ENCODE measurements at regions of chr12 and their contacts with region 1.

Region 1: DNA sequence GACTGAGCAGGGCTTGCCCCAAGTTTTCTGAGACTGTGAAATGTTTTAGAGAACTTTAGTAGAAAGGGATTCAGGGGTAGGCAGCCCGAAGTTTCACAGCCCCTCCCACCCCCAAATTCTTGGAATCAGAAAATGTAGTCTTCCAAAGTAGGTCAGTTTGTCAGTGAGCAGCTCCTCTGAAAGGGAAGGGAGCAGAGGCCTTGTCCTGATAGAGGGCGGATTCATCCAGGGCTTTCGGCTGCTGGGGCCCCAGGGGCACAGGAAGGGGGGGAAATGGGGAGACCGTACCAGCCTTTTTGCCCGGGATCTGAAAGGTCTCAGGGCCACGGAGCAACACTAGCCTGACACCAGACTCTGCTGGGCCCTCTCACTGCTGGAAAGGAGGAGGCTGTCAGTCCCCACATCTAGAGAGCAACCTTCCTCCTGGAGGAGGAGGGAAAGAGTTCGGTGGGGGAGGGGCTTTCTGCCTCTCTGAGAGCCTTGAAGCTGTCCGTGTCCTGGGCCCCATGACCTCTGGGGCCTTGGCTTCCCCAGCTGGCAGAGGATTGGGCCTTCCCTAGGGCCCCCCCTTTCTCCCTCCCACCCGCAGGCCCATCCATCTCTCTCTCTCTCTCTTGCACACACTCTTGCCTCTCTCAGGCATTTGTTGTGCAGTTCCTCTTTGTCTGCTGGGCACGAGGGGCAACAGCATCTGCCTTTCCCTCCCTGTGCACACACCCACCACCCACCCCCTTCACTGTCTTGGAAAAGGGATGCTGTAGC is at the start of gene IKZF4:
- DNase-seq: peak; percentile 42
- ATAC-seq: peak; percentile 17
- H3K4me3 Mint-ChIP-seq: peak within 1 kb of the TSS; percentile 93
- H3K27ac Mint-ChIP-seq: peak within 1 kb of the TSS; percentile 96
- H3K4me1 Mint-ChIP-seq: peaks cover 42% of the 10 kb centered on the region
- H3K27me3 Mint-ChIP-seq: no peaks in the 10 kb centered on the region
- total RNA-seq, gene IKZF4: 14.9 to 18.2 TPM

Region 2: DNA sequence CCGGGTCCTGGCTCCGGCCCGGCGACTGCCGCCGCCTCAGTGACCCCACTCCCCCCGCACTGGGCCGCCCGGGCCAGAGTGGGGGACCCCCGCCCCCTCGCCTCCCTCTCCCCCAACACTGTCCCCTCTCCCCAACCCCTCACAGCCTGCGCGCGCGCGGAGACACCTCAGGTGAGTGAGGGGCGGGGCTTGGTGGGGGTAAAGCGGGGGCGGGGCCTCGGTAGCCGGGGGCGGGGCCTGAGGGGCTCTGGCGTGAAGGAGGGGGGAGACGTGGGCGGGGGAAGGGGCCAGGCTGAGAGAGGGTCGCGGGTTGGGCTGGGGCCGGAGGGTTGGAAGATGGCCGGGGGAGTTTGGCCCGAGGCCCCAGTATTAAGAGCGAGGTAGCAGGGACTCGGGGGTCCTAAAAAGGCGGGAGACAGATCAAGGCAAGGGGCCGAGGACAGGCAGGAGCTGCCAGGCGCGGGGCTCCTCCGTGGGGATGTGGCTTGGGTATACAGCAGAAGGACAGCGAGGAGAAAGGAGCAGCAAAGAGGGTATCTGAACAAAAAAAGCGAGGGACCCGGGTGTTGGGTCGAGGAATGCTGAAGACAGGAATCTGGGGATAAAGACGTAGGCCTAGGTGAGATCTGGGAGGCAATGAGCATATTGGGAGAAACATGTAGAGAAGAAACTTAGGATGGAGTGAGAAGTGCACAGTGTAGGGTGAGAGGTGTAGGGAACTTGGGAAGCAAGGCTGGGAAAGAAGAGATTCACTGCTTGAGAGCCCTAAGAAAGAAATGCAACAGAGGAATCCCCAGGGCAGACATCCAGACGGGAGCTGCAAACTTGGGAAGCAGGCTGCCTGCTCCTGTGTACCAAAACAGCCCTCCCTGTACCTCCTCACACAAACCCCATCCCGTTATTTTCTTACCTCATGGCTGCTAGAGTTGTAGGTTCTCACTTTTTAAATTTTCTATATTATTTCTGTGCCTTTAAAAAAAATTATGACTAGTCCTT is 12.7 kb before region 1 on chr12:
- POLR2A ChIA-PET with region 1: interaction called, 24 read pairs
- DNase-seq: peak; percentile 79
- ATAC-seq: peak; percentile 79
- H3K4me3 Mint-ChIP-seq: peak overlapping the region; percentile 86
- H3K27ac Mint-ChIP-seq: peak overlapping the region; percentile 85
- H3K4me1 Mint-ChIP-seq: peaks cover 22% of the 10 kb centered on the region
- H3K27me3 Mint-ChIP-seq: no peaks in the 10 kb centered on the region

Region 3: DNA sequence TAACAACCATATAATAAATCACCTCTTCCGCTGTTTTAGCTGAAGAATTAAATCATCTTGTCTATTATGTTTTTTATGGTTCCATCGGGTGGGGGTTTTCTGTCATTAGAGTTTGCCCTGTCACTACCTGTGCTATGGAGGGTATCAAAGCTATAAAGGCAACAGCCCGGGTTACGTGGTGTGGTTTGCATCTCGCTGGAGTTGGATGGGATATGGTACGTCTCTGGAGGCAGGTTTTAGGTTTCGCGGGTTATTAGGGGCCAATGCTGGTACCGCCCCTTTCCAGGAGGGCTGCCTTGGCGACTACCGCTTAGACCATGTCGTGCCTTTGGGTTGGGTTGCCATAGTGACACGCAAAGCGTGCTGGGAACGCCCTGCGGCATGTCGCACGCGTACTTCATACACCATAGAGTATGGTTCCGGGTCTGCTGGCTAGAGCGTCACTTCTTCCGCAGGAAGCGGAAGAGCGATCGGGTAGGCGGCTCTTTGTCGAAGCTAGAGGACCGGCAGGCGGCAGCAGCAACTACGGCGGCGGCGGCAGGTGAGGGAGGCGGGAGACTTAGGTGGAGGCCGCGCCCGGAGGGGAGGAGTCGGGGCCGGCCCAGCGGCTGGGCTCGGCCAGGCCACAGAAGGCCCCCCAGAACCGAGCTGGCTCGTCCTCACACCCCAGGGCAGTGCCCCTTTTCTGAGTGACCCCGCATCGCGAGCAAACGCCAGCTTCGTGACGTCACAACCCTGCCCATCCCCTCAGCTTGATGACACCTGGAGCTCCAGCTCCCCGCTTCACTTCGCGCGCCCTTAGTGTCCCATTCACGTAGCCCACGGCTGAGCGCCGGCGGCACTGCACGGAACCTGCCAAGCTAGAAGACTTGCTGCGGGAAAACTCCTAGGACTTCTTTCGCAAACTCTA is 97.4 kb after region 1 on chr12 and contains the start of gene ZC3H10:
- POLR2A ChIA-PET with region 1: no interaction called
- DNase-seq: peak; percentile 94
- ATAC-seq: peak; percentile 81
- H3K4me3 Mint-ChIP-seq: peak within 1 kb of the TSS; percentile 98
- H3K27ac Mint-ChIP-seq: peak within 1 kb of the TSS; percentile 99
- H3K4me1 Mint-ChIP-seq: peaks cover 24% of the 10 kb centered on the region
- H3K27me3 Mint-ChIP-seq: no peaks in the 10 kb centered on the region
- total RNA-seq, gene ZC3H10: 10.6 to 12.0 TPM

Measured in activated naive CD8-positive, alpha-beta T cell treated with anti-CD3 and anti-CD28 coated beads, Interleukin-2, amount 10 ng/mL, durations not matched to agents 7 days and 5 days (primary cell).